PC-9 (cell line): ENCODE measurements at regions of chr1 and their contacts with region 1.

Region 1: GRCh38 chr1:75991497-75992114 is 59.4 kb upstream of the ASB17 start:
- DNase-seq: peak; percentile 68 to 69
- H3K4me3 ChIP-seq: no peak overlapping the region
- H3K27ac ChIP-seq: no peak overlapping the region
- H3K4me1 ChIP-seq: no peaks in the 10 kb centered on the region
- H3K27me3 ChIP-seq: peaks cover 6% of the 10 kb centered on the region; the same call in 1 of the 2 replicates
- CTCF ChIP-seq: peak; percentile 96

Region 2: DNA sequence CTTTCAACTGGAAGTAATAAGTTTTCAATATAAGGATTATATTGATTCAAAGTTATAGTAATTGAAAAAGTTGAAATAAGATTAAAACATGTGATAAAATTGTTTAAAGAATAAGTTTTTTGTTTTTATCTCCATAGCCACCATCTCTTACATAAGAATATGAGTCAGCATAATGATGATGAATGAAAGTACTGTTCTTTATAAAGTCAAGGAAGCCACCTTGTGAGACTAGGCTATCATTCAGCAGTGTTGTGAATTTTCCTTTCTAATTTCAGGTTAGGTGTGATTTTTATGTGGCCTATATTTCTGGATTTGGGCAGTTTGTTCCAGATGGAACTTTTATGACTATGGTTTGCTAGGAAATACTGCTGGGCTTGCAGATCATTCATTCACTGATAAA is 37.0 kb before region 1 on chr1:
- CTCF ChIA-PET with region 1: no interaction called
- POLR2A ChIA-PET with region 1: no interaction called
- intact Hi-C with region 1: loop called (anchors 5 kb)
- DNase-seq: peak in 1 of 2 experiments; percentile 76
- H3K4me3 ChIP-seq: no peak overlapping the region
- H3K27ac ChIP-seq: peak overlapping the region; percentile 56
- H3K4me1 ChIP-seq: peaks cover 12% of the 10 kb centered on the region
- H3K27me3 ChIP-seq: no peaks in the 10 kb centered on the region
- CTCF ChIP-seq: no peak

Region 3: GRCh38 chr1:76074321-76075187 is 82.9 kb after region 1 on chr1 and contains the start of gene ST6GALNAC3:
- CTCF ChIA-PET with region 1: no interaction called
- POLR2A ChIA-PET with region 1: no interaction called
- intact Hi-C with region 1: no loop called
- DNase-seq: peak in 1 of 2 experiments; percentile 9
- H3K4me3 ChIP-seq: no peak within 1 kb of the TSS
- H3K27ac ChIP-seq: no peak within 1 kb of the TSS
- H3K4me1 ChIP-seq: no peaks in the 10 kb centered on the region
- H3K27me3 ChIP-seq: no peaks in the 10 kb centered on the region
- CTCF ChIP-seq: no peak
- total RNA-seq, gene ST6GALNAC3: 0.04 TPM in 1 of 2 replicates, not detected in the other